Prostate gland (tissue), 2 donors: ENCODE measurements at regions of chr21 and their contacts with region 1.

Region 1: GRCh38 chr21:29477941-29478340 is 179.2 kb downstream of the BACH1 start:
- DNase-seq: no peak
- H3K4me3 ChIP-seq: no peak overlapping the region
- H3K27ac ChIP-seq: no peak overlapping the region
- H3K4me1 ChIP-seq: no peaks in the 10 kb centered on the region
- H3K27me3 ChIP-seq: no peaks in the 10 kb centered on the region
- CTCF ChIP-seq: no peak
- POLR2A ChIP-seq: no peak

Region 2: GRCh38 chr21:27572686-27573085 is 1905.3 kb before region 1 on chr21:
- intact Hi-C with region 1: no loop called
- DNase-seq: no peak
- H3K4me3 ChIP-seq: no peak overlapping the region
- H3K27ac ChIP-seq: no peak overlapping the region
- H3K4me1 ChIP-seq: no peaks in the 10 kb centered on the region
- H3K27me3 ChIP-seq: no peaks in the 10 kb centered on the region
- CTCF ChIP-seq: no peak
- POLR2A ChIP-seq: no peak

Region 3: GRCh38 chr21:28283641-28284490 is 1194.1 kb before region 1 on chr21:
- intact Hi-C with region 1: no loop called
- DNase-seq: no peak
- H3K4me3 ChIP-seq: no peak overlapping the region
- H3K27ac ChIP-seq: no peak overlapping the region
- H3K4me1 ChIP-seq: peaks cover 4% of the 10 kb centered on the region
- H3K27me3 ChIP-seq: no peaks in the 10 kb centered on the region
- CTCF ChIP-seq: no peak
- POLR2A ChIP-seq: no peak

Region 4: DNA sequence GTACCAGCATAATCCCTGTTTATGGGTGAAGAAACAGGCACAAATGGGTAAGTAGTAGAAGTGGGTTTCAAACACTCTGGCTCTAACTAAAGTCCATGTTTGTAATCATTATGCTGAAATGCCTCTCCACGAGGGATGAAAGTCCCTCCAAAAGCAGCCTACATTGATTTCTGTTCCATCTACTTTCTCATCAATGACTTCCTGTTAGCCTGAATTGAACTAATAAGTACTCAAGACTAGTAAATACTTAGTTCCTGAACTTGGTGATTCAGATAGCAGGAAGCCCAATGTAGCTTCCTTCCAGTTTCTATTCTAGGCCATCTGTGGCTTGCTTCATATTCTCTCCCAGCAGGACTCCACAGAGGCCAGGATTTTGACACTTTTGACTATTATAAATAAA is 190.6 kb before region 1 on chr21:
- intact Hi-C with region 1: no loop called
- DNase-seq: no peak
- H3K4me3 ChIP-seq: no peak overlapping the region
- H3K27ac ChIP-seq: no peak overlapping the region
- H3K4me1 ChIP-seq: no peaks in the 10 kb centered on the region
- H3K27me3 ChIP-seq: no peaks in the 10 kb centered on the region
- CTCF ChIP-seq: no peak
- POLR2A ChIP-seq: no peak

Region 5: DNA sequence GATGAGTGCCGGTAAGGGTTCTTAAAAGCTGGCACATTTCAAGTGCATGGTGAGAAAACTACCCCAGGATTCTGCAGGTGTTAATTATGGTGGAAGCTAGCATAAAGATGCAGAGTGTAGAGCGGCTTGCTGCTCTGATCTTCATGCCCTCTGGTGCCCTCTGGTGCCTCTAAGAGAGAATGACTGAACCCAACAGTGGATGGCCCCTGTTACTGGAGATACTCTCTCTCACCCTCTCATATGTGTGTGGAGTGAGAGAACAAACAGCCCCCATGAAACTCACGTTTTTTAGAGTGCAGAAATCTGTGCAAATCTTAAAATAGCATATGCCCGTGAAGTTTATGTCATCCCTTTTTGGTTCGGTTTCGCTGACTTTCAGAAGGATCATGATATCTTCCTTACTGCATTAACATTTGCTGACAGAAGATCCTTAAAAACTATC is 371.8 kb after region 1 on chr21:
- intact Hi-C with region 1: loop called (anchors 1 kb)
- DNase-seq: peak; percentile 51
- H3K4me3 ChIP-seq: no peak overlapping the region
- H3K27ac ChIP-seq: no peak overlapping the region
- H3K4me1 ChIP-seq: no peaks in the 10 kb centered on the region
- H3K27me3 ChIP-seq: no peaks in the 10 kb centered on the region
- CTCF ChIP-seq: peak; percentile 24 to 69 (median 62)
- POLR2A ChIP-seq: no peak